ENCODE measurements at regions of chr10 and their contacts with region 1.

Region 1: GRCh38 chr10:5283305-5284158 is 81.2 kb upstream of the UCN3 start:
- DNase-seq: peak; percentile 83
- H3K4me3 Mint-ChIP-seq: no peak overlapping the region
- H3K27ac Mint-ChIP-seq: peak overlapping the region; percentile 72
- H3K4me1 Mint-ChIP-seq: peaks cover 38% of the 10 kb centered on the region
- H3K27me3 Mint-ChIP-seq: no peaks in the 10 kb centered on the region

Region 2: GRCh38 chr10:4902571-4903011 is 380.9 kb before region 1 on chr10:
- CTCF ChIA-PET with region 1: no interaction called
- intact Hi-C with region 1: loop called (anchors 5 kb)
- DNase-seq: peak; percentile 42
- H3K4me3 Mint-ChIP-seq: no peak overlapping the region
- H3K27ac Mint-ChIP-seq: peak overlapping the region; percentile 66
- H3K4me1 Mint-ChIP-seq: peaks cover 17% of the 10 kb centered on the region
- H3K27me3 Mint-ChIP-seq: no peaks in the 10 kb centered on the region

Region 3: GRCh38 chr10:5014936-5015335 is 268.6 kb before region 1 on chr10:
- CTCF ChIA-PET with region 1: no interaction called
- intact Hi-C with region 1: loop called (anchors 5 kb)
- DNase-seq: peak; percentile 15
- H3K4me3 Mint-ChIP-seq: no peak overlapping the region
- H3K27ac Mint-ChIP-seq: no peak overlapping the region
- H3K4me1 Mint-ChIP-seq: no peaks in the 10 kb centered on the region
- H3K27me3 Mint-ChIP-seq: no peaks in the 10 kb centered on the region

Region 4: GRCh38 chr10:5094265-5095205 is 189.0 kb before region 1 on chr10 and contains the start of gene AKR1C3:
- CTCF ChIA-PET with region 1: interaction called, 3 read pairs
- intact Hi-C with region 1: loop called (anchors 1 kb)
- DNase-seq: no peak
- H3K4me3 Mint-ChIP-seq: peak within 1 kb of the TSS; percentile 55
- H3K27ac Mint-ChIP-seq: no peak within 1 kb of the TSS
- H3K4me1 Mint-ChIP-seq: peaks cover 9% of the 10 kb centered on the region
- H3K27me3 Mint-ChIP-seq: peaks cover 2% of the 10 kb centered on the region
- total RNA-seq, gene AKR1C3: 0.33 to 0.47 TPM

Region 5: DNA sequence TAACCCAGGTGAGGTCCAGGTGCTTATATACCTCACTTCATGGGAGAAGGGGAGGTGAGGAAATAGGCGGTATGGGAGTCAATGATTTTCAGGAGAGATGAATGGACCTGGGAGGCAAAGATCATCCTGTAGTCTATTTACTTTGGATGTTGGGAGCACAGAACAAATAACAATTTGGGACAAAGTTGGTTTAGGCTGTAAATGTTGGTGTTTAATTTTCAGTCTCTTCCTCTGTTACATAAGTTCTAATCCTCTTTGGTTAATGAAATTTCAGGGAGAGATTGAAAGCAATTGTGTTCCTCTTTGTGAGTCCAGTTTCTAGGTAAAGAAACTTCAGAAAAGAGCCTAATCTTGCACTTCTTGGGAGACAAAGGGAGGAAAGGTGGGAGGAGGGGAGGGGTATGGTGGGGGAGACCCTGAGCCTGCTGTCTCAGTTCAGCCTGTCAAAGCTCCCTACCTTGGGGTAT is 40.0 kb before region 1 on chr10:
- CTCF ChIA-PET with region 1: no interaction called
- intact Hi-C with region 1: no loop called
- DNase-seq: no peak
- H3K4me3 Mint-ChIP-seq: no peak overlapping the region
- H3K27ac Mint-ChIP-seq: no peak overlapping the region
- H3K4me1 Mint-ChIP-seq: no peaks in the 10 kb centered on the region
- H3K27me3 Mint-ChIP-seq: no peaks in the 10 kb centered on the region

Region 6: DNA sequence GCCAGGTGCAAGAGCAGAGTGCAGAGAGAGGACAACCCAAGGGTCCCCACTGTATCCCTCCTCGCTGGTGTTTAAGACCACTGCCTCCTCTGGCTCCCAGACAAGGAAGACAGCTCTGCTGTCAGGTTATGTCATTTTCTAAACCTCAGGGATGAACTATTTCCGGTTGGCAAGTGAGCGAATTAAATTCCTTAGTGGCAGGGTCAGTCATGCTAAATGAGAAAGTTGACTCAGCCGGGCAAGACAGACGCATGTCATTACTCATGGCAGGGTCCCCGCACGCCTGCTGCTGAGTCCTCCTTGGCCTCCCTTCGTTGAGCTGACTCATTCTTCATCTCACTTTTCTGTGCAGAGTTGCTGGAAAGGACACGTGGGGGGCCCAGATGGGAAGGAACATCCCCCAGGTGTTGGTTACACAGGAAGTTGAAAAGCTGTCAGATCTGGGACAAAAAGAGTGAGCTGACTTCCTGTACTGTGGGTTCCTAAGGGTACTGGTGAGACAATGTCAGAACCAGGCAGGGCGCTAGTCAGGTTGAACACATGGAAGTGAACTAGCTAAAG is 34.1 kb after region 1 on chr10:
- CTCF ChIA-PET with region 1: interaction called, 5 read pairs
- intact Hi-C with region 1: loop called (anchors 5 kb)
- DNase-seq: peak; percentile 96
- H3K4me3 Mint-ChIP-seq: peak overlapping the region; percentile 28
- H3K27ac Mint-ChIP-seq: peak overlapping the region; percentile 89
- H3K4me1 Mint-ChIP-seq: peaks cover 73% of the 10 kb centered on the region
- H3K27me3 Mint-ChIP-seq: no peaks in the 10 kb centered on the region

Region 7: DNA sequence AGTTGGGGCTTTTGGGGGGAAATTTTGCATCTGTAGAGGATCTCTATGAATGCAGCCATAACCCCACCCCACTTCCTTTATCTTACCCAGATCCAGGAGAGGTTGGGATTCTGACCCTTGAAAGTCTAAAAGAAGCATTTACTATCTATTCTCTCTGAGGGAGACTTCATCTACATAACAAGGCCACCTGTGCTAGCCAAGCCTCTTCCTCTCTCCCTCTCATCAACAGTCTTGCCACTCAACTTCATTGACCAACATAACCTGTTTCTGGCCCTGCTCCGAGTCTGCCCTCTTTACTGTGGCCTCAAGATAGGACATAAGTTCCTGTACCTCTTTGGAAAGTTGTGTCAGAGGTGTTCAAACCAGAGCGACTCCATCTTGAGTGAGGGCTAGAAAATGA is 101.7 kb after region 1 on chr10:
- CTCF ChIA-PET with region 1: interaction called, 4 read pairs
- intact Hi-C with region 1: loop called (anchors 1 kb)
- DNase-seq: no peak
- H3K4me3 Mint-ChIP-seq: no peak overlapping the region
- H3K27ac Mint-ChIP-seq: no peak overlapping the region
- H3K4me1 Mint-ChIP-seq: no peaks in the 10 kb centered on the region
- H3K27me3 Mint-ChIP-seq: no peaks in the 10 kb centered on the region

Region 8: GRCh38 chr10:5434017-5434753 is 150.7 kb after region 1 on chr10:
- CTCF ChIA-PET with region 1: interaction called, 3 read pairs
- intact Hi-C with region 1: loop called (anchors 5 kb)
- DNase-seq: no peak
- H3K4me3 Mint-ChIP-seq: no peak overlapping the region
- H3K27ac Mint-ChIP-seq: no peak overlapping the region
- H3K4me1 Mint-ChIP-seq: peaks cover 8% of the 10 kb centered on the region
- H3K27me3 Mint-ChIP-seq: no peaks in the 10 kb centered on the region

Region 9: GRCh38 chr10:5525561-5526341 is 242.2 kb after region 1 on chr10:
- CTCF ChIA-PET with region 1: no interaction called
- intact Hi-C with region 1: no loop called
- DNase-seq: no peak
- H3K4me3 Mint-ChIP-seq: no peak overlapping the region
- H3K27ac Mint-ChIP-seq: no peak overlapping the region
- H3K4me1 Mint-ChIP-seq: no peaks in the 10 kb centered on the region
- H3K27me3 Mint-ChIP-seq: no peaks in the 10 kb centered on the region

Measured in activated naive CD4-positive, alpha-beta T cell treated with anti-CD3 and anti-CD28 coated beads for 36 hours (primary cell).